MCF 10A (cell line): ENCODE measurements at regions of chr2 and their contacts with region 1.

Region 1: GRCh38 chr2:176001916-176002687 is at the start of gene LNPK:
- DNase-seq: peak; percentile 91
- H3K4me3 Mint-ChIP-seq: peak within 1 kb of the TSS; percentile 78
- H3K27ac Mint-ChIP-seq: peak within 1 kb of the TSS; percentile 53
- H3K4me1 Mint-ChIP-seq: peaks cover 9% of the 10 kb centered on the region
- H3K27me3 Mint-ChIP-seq: no peaks in the 10 kb centered on the region
- CTCF ChIP-seq: no peak
- total RNA-seq, gene LNPK: 21.8 and 23.3 TPM in 2 replicates

Region 2: GRCh38 chr2:175690113-175690837 is 311.8 kb before region 1 on chr2:
- CTCF ChIA-PET with region 1: interaction called, 7 read pairs
- POLR2A ChIA-PET with region 1: interaction called, 3 read pairs
- intact Hi-C with region 1: loop called (anchors 5 kb)
- DNase-seq: peak; percentile 74
- H3K4me3 Mint-ChIP-seq: no peak overlapping the region
- H3K27ac Mint-ChIP-seq: no peak overlapping the region
- H3K4me1 Mint-ChIP-seq: no peaks in the 10 kb centered on the region
- H3K27me3 Mint-ChIP-seq: peaks cover 44% of the 10 kb centered on the region
- CTCF ChIP-seq: peak; percentile 57

Region 3: DNA sequence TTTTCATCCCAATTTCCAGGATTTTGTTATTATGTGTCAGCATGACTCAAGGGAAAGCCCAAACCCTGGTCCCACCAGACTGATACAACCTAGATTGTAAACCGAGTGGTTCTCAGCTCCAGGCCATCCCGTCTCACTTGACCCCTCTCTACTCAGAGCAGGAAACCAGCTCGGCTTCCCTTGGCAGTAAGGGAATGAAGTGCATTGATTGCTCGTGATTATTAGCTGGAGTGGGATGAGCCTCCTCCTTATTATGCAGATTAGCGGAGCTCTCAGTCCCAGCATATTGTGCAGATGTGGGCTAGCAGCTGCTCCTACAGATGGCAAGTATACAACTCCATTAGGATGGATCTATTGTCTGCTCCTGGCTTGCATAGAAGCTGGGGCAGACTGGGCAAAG is 167.6 kb before region 1 on chr2:
- CTCF ChIA-PET with region 1: no interaction called
- POLR2A ChIA-PET with region 1: no interaction called
- intact Hi-C with region 1: no loop called
- DNase-seq: no peak
- H3K4me3 Mint-ChIP-seq: no peak overlapping the region
- H3K27ac Mint-ChIP-seq: no peak overlapping the region
- H3K4me1 Mint-ChIP-seq: peaks cover 5% of the 10 kb centered on the region
- H3K27me3 Mint-ChIP-seq: no peaks in the 10 kb centered on the region
- CTCF ChIP-seq: no peak

Region 4: GRCh38 chr2:175973373-175973772 is 28.7 kb before region 1 on chr2:
- CTCF ChIA-PET with region 1: no interaction called
- POLR2A ChIA-PET with region 1: interaction called, 14 read pairs
- intact Hi-C with region 1: no loop called
- DNase-seq: no peak
- H3K4me3 Mint-ChIP-seq: no peak overlapping the region
- H3K27ac Mint-ChIP-seq: no peak overlapping the region
- H3K4me1 Mint-ChIP-seq: peaks cover 5% of the 10 kb centered on the region
- H3K27me3 Mint-ChIP-seq: no peaks in the 10 kb centered on the region
- CTCF ChIP-seq: no peak

Region 5: DNA sequence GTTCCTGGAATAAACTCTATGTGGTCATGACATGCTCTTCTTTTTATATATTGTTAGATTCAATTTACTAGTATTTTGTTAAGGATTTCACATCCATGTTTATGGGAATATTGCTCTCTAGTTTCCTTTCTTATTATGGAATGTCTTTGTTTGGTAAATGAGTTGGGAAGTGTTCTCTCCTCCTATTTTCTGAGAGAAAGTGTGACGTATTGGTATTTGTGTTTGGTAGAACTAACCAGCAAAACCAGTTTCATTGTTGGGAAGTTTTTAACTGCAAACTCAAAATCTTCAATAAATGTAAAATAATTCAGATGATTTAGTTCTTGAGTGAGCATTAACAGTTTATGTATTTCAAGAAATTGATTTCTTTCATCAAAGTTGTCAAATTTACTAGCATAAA is 11.3 kb after region 1 on chr2:
- CTCF ChIA-PET with region 1: no interaction called
- POLR2A ChIA-PET with region 1: interaction called, 15 read pairs
- intact Hi-C with region 1: no loop called
- DNase-seq: no peak
- H3K4me3 Mint-ChIP-seq: no peak overlapping the region
- H3K27ac Mint-ChIP-seq: no peak overlapping the region
- H3K4me1 Mint-ChIP-seq: no peaks in the 10 kb centered on the region
- H3K27me3 Mint-ChIP-seq: no peaks in the 10 kb centered on the region
- CTCF ChIP-seq: no peak

Region 6: GRCh38 chr2:176024083-176024482 is 22.0 kb after region 1 on chr2:
- CTCF ChIA-PET with region 1: no interaction called
- POLR2A ChIA-PET with region 1: interaction called, 15 read pairs
- intact Hi-C with region 1: no loop called
- DNase-seq: no peak
- H3K4me3 Mint-ChIP-seq: no peak overlapping the region
- H3K27ac Mint-ChIP-seq: no peak overlapping the region
- H3K4me1 Mint-ChIP-seq: peaks cover 5% of the 10 kb centered on the region
- H3K27me3 Mint-ChIP-seq: peaks cover 67% of the 10 kb centered on the region
- CTCF ChIP-seq: no peak

Region 7: GRCh38 chr2:177056481-177056929 is 1054.4 kb after region 1 on chr2:
- CTCF ChIA-PET with region 1: no interaction called
- POLR2A ChIA-PET with region 1: no interaction called
- intact Hi-C with region 1: no loop called
- DNase-seq: no peak
- H3K4me3 Mint-ChIP-seq: no peak overlapping the region
- H3K27ac Mint-ChIP-seq: no peak overlapping the region
- H3K4me1 Mint-ChIP-seq: peaks cover 10% of the 10 kb centered on the region
- H3K27me3 Mint-ChIP-seq: no peaks in the 10 kb centered on the region
- CTCF ChIP-seq: no peak